ENCODE measurements at regions of chr19 and their contacts with region 1.

Region 1: DNA sequence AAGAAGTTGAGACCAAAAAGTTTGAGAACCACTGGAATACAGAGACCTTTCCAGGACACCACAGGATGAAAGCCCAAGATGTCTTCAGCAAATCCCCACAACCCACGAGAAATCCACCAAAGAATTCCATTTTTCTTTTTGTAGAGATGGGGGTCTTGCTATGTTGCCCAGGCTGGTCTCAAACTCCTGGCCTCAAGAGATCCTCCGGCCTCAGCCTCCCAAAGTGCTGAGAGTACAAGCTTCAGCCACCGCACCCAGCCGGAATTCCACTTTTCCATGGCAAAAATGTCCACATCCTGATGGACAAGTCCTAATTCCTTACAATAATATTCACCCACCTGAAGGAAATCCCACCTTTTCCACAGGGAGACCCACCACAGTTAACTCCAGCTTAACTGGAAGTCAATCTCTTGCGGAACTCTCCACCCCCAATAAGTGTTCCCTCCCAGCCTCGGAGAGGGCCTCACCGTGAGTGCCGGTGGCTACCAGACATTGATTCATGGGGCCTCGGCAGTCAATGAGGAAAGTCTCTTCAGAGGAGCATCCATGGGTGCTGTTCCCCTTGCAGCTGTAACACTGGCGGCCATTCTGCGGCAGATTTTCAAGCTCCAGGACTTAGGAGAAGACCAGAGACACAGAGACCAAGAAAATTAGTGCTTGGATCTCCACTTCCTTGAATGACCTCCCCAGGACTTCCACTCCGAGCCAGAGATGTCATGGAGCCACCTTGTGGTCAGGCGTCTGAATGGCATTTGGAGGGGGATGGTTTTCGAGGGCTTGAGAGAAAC is 12.3 kb upstream of the CADM4 start:
- DNase-seq: peak in 4 of 10 donors; percentile 19 to 37 (median 24)
- ATAC-seq: peak; percentile 25 to 44
- H3K4me3 Mint-ChIP-seq: no peak overlapping the region
- H3K27ac Mint-ChIP-seq: peak overlapping the region in 2 of 10 donors; percentile 52 to 70
- H3K4me1 Mint-ChIP-seq: peaks cover 0 to 2% (median 0%) of the 10 kb centered on the region in 4 donors
- H3K27me3 Mint-ChIP-seq: no peaks in the 10 kb centered on the region

Region 2: DNA sequence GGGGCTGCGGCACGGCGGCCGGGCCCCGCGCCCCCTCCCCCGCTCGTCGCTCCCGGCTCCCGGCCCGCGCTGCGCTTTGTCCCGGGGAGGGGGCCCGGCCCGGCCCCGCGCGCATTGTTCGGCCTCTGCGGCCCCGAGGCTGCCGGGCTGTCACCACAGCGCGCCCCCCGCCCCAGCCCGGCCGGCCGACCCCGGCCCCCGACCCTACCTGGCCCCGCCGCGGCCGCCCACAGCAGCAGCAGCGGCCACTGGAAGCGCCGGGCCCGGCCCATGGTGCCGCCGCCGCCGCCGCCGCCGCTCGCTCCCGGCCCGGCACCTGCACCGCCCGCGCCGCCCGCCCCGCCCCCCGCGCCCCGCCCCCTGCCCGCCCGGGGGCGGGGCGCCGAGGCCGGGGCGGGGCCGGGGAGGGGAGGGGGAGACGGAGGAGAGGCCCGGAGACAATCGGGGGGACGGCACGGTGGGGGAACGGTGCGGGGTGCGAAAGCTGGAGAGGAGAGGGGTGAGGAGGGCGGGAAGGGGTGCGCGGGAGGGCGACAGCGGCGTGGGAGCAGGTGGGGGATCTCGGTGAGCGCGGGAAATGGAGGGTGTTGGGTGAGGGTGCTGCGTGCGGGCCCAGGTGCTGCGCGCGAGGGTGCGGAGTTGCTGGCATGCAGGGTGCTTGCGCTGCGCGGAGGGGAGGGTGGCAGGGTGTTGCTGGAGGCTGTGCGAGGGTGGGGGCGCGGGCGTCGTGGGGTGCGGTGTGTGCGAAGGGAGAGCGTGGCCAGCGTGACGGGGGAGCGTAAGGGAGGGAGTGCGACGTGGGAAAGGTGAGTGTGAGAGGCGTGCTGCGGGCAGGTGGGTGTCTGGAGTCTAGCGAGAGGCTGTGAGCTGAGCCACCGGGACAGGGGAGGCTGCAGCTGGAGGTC is 12.2 kb before region 1 on chr19 and contains the start of gene CADM4:
- POLR2A ChIA-PET with region 1: no interaction called
- DNase-seq: peak; percentile 22 to 76 (median 53)
- ATAC-seq: peak; percentile 86 to 87
- H3K4me3 Mint-ChIP-seq: peak within 1 kb of the TSS; percentile 76 to 91 (median 86)
- H3K27ac Mint-ChIP-seq: peak within 1 kb of the TSS; percentile 8 to 88 (median 60)
- H3K4me1 Mint-ChIP-seq: peaks cover 8 to 34% (median 17%) of the 10 kb centered on the region in 4 donors
- H3K27me3 Mint-ChIP-seq: peaks cover 14 to 46% (median 22%) of the 10 kb centered on the region in 5 donors
- polyA plus RNA-seq, gene CADM4: not detected

Region 3: DNA sequence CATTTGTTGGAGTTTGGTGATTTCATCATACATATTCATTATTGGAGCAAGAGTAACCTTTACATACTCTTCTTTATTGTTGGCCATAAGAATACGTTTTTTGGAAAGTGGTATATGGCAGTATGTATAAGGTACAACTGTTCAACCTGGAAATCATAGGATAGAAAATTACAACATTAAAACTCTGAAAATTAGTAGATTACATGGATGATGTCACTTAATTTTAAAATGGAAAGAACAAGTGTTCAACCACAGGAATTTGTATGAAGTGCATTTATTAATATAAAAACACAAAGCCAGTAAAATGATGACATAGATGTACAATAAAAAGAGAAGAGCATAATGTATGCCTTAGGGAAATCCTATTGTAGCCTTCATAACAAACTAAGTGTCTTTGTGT is 324.8 kb after region 1 on chr19:
- POLR2A ChIA-PET with region 1: interaction called, 11 read pairs
- DNase-seq: no peak
- ATAC-seq: no peak
- H3K4me3 Mint-ChIP-seq: no peak overlapping the region
- H3K27ac Mint-ChIP-seq: no peak overlapping the region
- H3K4me1 Mint-ChIP-seq: no peaks in the 10 kb centered on the region
- H3K27me3 Mint-ChIP-seq: peaks cover 0 to 3% (median 0%) of the 10 kb centered on the region in 5 donors